ENCODE measurements at regions of chr11 and their contacts with region 1.

Region 1: DNA sequence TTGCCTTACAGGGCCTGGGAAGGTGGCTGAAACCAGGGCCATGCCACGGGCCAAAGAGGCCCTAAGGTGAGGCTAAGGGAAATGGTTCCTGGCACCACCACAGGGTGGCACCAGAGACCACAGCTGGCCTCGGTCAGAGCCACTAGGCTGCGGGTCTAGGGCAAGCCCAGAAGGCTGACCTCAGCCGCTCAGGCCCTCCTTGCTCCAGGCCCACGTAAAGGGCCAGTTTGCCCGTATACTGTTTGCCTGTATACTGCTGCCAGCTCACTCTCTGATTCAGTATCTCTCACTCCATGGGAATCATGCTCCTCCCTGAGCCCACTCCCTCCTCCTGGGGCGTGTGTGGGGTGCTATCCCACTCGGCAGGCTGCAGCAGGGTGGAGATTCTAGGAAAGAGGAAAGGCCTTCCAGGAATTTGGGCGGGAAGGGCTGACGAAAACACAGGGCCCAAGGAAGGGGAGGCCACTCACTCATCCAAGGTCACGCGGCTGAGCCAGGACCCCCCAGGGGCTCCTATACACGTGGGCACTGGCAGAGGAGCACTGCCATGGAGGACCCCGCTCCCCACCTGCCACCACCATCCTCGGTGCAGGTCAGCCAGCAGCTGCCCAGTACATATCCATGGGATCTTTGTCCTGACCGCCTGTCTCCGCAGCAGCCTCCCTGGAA is 62.4 kb downstream of the NECTIN1 start:
- DNase-seq: peak; percentile 28 to 75 (median 62)
- ATAC-seq: peak; percentile 69
- H3K4me3 ChIP-seq: no peak overlapping the region
- H3K4me3 Mint-ChIP-seq: no peak overlapping the region
- H3K27ac ChIP-seq: no peak overlapping the region
- H3K27ac Mint-ChIP-seq: no peak overlapping the region
- H3K4me1 ChIP-seq: no peaks in the 10 kb centered on the region
- H3K4me1 Mint-ChIP-seq: no peaks in the 10 kb centered on the region
- H3K27me3 ChIP-seq: no peaks in the 10 kb centered on the region
- H3K27me3 Mint-ChIP-seq: no peaks in the 10 kb centered on the region
- CTCF ChIP-seq: peak; percentile 69

Region 2: GRCh38 chr11:119599864-119600541 is 66.6 kb before region 1 on chr11:
- CTCF ChIA-PET with region 1: no interaction called
- POLR2A ChIA-PET with region 1: no interaction called
- intact Hi-C with region 1: no loop called
- DNase-seq: no peak
- ATAC-seq: no peak
- H3K4me3 ChIP-seq: no peak overlapping the region
- H3K4me3 Mint-ChIP-seq: no peak overlapping the region
- H3K27ac ChIP-seq: no peak overlapping the region
- H3K27ac Mint-ChIP-seq: no peak overlapping the region
- H3K4me1 ChIP-seq: no peaks in the 10 kb centered on the region
- H3K4me1 Mint-ChIP-seq: no peaks in the 10 kb centered on the region
- H3K27me3 ChIP-seq: no peaks in the 10 kb centered on the region
- H3K27me3 Mint-ChIP-seq: peaks cover 19% of the 10 kb centered on the region
- CTCF ChIP-seq: no peak

Region 3: GRCh38 chr11:119741369-119742262 is 75.0 kb after region 1 on chr11:
- CTCF ChIA-PET with region 1: interaction called, 9 read pairs
- POLR2A ChIA-PET with region 1: no interaction called
- intact Hi-C with region 1: loop called (anchors 1 kb)
- DNase-seq: peak; percentile 31 to 77 (median 62)
- ATAC-seq: peak; percentile 71
- H3K4me3 ChIP-seq: no peak overlapping the region
- H3K4me3 Mint-ChIP-seq: peak overlapping the region; percentile 64
- H3K27ac ChIP-seq: no peak overlapping the region
- H3K27ac Mint-ChIP-seq: no peak overlapping the region
- H3K4me1 ChIP-seq: peaks cover 7% of the 10 kb centered on the region
- H3K4me1 Mint-ChIP-seq: peaks cover 13% of the 10 kb centered on the region
- H3K27me3 ChIP-seq: peaks cover 0 to 16% of the 10 kb centered on the region in 2 experiments
- H3K27me3 Mint-ChIP-seq: peaks cover 41% of the 10 kb centered on the region
- CTCF ChIP-seq: peak; percentile 75

Region 4: DNA sequence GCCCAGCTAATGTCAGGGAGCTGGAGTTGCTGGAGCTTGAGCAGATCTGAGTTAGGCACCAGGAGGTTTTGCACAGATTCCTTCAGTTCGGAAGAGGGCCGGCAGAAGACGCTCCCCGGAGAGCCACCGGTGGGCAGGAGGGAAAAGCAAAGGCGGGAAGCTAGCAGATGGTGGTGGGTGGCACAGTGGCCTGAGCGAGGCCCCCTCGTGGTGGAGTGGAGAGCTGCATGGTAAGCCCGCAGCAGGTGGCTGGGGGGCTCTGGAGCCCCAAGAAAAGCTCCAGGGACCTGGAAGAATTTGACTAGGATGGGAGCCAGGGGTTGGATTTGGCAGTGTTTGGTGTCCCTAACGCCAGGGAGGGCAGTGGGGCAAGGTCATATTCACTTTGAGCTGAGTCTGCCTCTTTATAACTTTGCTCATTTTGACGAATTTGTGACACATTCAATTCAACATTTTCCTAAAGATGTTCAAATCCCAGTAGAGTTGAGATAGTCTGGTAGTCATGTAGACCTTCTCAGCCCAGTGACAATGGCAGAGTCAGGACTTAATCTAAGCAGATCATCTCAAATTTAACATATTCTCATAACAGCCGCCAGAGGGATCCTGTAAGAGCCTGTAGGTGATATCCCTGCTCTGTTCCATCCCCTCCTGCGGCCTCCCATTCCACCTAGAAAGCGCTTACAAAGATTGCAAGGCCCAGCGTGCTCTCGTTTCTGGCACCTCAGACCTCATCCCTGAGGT is 413.3 kb after region 1 on chr11:
- CTCF ChIA-PET with region 1: interaction called, 4 read pairs
- POLR2A ChIA-PET with region 1: no interaction called
- intact Hi-C with region 1: loop called in 1 of 2 experiments (anchors 1 kb)
- DNase-seq: peak in 5 of 9 experiments; percentile 4 to 37 (median 32)
- ATAC-seq: no peak
- H3K4me3 ChIP-seq: no peak overlapping the region
- H3K4me3 Mint-ChIP-seq: no peak overlapping the region
- H3K27ac ChIP-seq: no peak overlapping the region
- H3K27ac Mint-ChIP-seq: no peak overlapping the region
- H3K4me1 ChIP-seq: no peaks in the 10 kb centered on the region
- H3K4me1 Mint-ChIP-seq: no peaks in the 10 kb centered on the region
- H3K27me3 ChIP-seq: peaks cover 0 to 3% of the 10 kb centered on the region in 2 experiments
- H3K27me3 Mint-ChIP-seq: peaks cover 26% of the 10 kb centered on the region
- CTCF ChIP-seq: peak; percentile 70

Region 5: DNA sequence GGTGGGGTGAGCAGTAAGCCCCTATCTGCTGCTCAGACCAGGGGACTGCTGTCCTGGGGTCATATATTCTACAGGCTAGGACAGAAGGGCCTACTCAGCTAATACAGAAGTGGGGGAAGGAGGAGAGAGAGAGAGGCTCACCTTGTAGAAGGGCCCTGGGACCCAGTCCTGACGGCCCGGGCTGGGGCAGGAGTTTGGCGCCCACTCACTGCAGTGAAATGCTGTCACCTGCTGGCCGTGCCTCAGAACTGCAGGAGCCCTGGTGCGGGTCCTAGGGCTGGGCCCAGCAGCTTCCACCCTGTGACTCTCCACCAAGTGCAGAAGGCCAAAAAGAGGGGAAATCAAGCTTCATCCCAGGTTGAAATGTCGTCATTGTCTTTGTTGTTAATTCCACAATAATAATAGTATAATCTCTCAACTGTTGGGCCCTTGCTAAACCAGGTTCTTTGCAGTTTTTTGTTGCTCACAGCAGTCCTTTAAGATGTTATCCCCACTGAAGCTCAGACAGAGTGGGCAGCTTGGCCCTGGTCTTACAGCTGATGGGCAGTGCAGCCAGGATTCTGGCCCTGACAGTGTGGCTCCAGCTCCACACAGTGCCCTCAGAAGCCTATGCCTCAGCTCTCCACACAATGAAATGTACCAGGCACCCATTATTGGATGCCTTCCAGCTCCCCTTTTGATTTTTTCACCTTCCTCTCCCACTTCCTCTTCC is 441.7 kb after region 1 on chr11:
- CTCF ChIA-PET with region 1: interaction called, 6 read pairs
- POLR2A ChIA-PET with region 1: no interaction called
- intact Hi-C with region 1: loop called in 1 of 2 experiments (anchors 1 kb)
- DNase-seq: peak; percentile 18 to 68 (median 52)
- ATAC-seq: peak; percentile 58
- H3K4me3 ChIP-seq: no peak overlapping the region
- H3K4me3 Mint-ChIP-seq: no peak overlapping the region
- H3K27ac ChIP-seq: no peak overlapping the region
- H3K27ac Mint-ChIP-seq: no peak overlapping the region
- H3K4me1 ChIP-seq: no peaks in the 10 kb centered on the region
- H3K4me1 Mint-ChIP-seq: no peaks in the 10 kb centered on the region
- H3K27me3 ChIP-seq: no peaks in the 10 kb centered on the region
- H3K27me3 Mint-ChIP-seq: peaks cover 18% of the 10 kb centered on the region
- CTCF ChIP-seq: peak; percentile 95

Region 6: DNA sequence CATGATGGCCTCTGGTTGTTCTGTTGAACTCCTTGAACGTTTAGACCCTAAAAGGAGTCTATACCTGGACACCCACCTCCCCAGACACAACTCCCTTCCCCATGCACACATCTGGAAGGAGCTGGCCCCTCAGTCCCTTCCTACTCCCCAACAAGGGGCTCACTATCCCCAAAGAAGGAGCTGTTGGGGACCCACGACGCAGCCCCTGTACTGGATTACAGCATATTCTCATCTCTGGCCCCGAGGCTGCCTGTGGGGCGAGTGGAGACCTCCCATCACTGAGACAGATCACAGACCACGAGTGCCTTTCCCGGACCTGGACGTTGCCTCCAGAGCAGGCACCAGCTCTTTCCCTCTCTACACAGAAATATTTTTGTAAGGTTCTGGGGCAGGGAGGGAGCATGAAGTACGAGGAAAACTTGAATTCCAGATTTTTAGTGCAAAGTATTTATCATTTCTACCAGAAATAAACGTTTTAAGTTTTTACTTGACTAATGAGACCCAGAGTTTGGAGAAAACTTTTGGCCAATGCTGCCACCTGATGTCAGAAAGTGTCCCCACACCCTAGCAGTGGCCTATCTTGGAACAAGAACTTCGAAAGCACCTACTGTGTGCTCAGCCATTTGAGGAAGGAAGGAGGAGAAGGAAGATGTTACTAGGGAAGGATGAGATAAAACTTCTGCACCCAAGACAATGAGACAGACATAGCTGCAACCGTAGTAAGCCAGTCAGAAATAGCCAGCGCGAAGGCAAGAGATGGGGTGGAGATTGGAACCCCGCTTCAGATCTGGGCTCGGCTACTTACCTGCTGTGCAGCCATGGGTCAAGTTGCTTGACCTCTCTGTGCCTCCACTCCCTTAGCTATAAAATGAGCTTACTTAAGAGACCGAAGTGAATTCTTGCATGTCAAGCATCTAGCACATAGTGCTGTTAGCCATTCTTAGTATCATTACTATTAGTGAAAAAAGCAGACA is 563.1 kb after region 1 on chr11:
- CTCF ChIA-PET with region 1: no interaction called
- POLR2A ChIA-PET with region 1: no interaction called
- intact Hi-C with region 1: loop called in 1 of 2 experiments (anchors 2 kb)
- DNase-seq: peak in 3 of 9 experiments; percentile 13 to 43 (median 36)
- ATAC-seq: no peak
- H3K4me3 ChIP-seq: no peak overlapping the region
- H3K4me3 Mint-ChIP-seq: no peak overlapping the region
- H3K27ac ChIP-seq: no peak overlapping the region
- H3K27ac Mint-ChIP-seq: no peak overlapping the region
- H3K4me1 ChIP-seq: peaks cover 4% of the 10 kb centered on the region
- H3K4me1 Mint-ChIP-seq: peaks cover 6% of the 10 kb centered on the region
- H3K27me3 ChIP-seq: peaks cover 0 to under 1% of the 10 kb centered on the region in 2 experiments
- H3K27me3 Mint-ChIP-seq: peaks cover 6% of the 10 kb centered on the region
- CTCF ChIP-seq: peak; percentile 48

Region 7: GRCh38 chr11:120303004-120303637 is 636.5 kb after region 1 on chr11:
- CTCF ChIA-PET with region 1: no interaction called
- POLR2A ChIA-PET with region 1: no interaction called
- intact Hi-C with region 1: loop called in 1 of 2 experiments (anchors 2 kb)
- DNase-seq: peak; percentile 13 to 74 (median 49)
- ATAC-seq: peak; percentile 68
- H3K4me3 ChIP-seq: no peak overlapping the region
- H3K4me3 Mint-ChIP-seq: no peak overlapping the region
- H3K27ac ChIP-seq: no peak overlapping the region
- H3K27ac Mint-ChIP-seq: no peak overlapping the region
- H3K4me1 ChIP-seq: no peaks in the 10 kb centered on the region
- H3K4me1 Mint-ChIP-seq: no peaks in the 10 kb centered on the region
- H3K27me3 ChIP-seq: peaks cover 0 to 1% of the 10 kb centered on the region in 2 experiments
- H3K27me3 Mint-ChIP-seq: peaks cover 28% of the 10 kb centered on the region
- CTCF ChIP-seq: peak; percentile 89

Measured in CD8-positive, alpha-beta T cell (primary cell).